CD8-positive, alpha-beta T cell (primary cell): ENCODE measurements at regions of chr20 and their contacts with region 1.

Region 1: GRCh38 chr20:32674362-32674789 is 635 bp upstream of the C20orf203 start:
- DNase-seq: peak; percentile 49 to 77 (median 73)
- ATAC-seq: peak; percentile 73
- H3K4me3 ChIP-seq: no peak overlapping the region
- H3K4me3 Mint-ChIP-seq: peak overlapping the region; percentile 9
- H3K27ac ChIP-seq: no peak overlapping the region
- H3K27ac Mint-ChIP-seq: no peak overlapping the region
- H3K4me1 ChIP-seq: peaks cover 16% of the 10 kb centered on the region
- H3K4me1 Mint-ChIP-seq: peaks cover 32% of the 10 kb centered on the region
- H3K27me3 ChIP-seq: no peaks in the 10 kb centered on the region
- H3K27me3 Mint-ChIP-seq: no peaks in the 10 kb centered on the region
- CTCF ChIP-seq: peak; percentile 75

Region 2: DNA sequence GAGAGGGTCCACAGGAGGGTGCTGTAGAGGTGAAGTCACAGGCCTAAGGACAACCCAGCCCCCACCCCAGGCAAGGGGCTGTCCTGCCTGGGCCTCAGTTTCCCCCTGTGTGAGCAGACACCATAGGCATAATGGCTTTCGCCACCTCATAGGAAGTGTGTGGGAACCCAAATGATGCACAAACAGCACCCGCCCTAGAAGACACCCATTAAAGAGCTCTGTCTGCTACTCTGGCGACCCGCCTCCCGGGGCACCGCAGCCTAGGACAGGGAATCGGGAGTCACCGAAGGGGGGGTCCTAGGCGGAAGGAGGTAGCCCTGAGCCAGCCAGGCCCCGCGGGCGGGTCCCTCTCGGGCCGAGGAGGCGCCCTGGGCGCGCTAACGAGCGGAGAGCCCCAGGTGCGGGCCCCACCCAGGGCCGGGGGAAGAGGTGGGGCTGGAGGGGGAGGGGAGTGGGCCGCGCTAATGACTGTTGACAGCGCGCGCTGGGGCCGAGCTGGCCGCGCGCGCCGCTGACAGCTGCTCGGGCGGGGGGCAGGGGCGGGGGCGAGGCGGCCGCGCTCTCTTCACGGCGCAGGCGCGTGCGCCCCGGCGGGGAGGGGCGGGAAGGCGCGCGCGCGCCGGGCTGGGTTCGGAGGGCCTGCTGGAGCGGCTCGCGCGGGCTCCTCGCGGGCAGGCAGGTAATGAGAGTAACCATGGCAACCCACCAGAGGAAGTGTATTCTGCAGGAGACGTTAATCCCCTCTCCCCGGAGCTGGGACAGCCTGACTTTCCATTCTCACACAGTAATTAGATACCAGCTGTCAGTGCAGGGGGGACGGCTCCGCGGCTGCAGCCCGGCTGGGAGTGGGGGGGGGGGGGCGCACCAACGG is 138.2 kb before region 1 on chr20:
- CTCF ChIA-PET with region 1: no interaction called
- POLR2A ChIA-PET with region 1: no interaction called
- intact Hi-C with region 1: no loop called
- DNase-seq: peak; percentile 66 to 93 (median 79)
- ATAC-seq: peak; percentile 34
- H3K4me3 ChIP-seq: peak overlapping the region; percentile 33 to 49
- H3K4me3 Mint-ChIP-seq: peak overlapping the region; percentile 82
- H3K27ac ChIP-seq: peak overlapping the region; percentile 52 to 88
- H3K27ac Mint-ChIP-seq: peak overlapping the region; percentile 97
- H3K4me1 ChIP-seq: peaks cover 87% of the 10 kb centered on the region
- H3K4me1 Mint-ChIP-seq: peaks cover 87% of the 10 kb centered on the region
- H3K27me3 ChIP-seq: no peaks in the 10 kb centered on the region
- H3K27me3 Mint-ChIP-seq: no peaks in the 10 kb centered on the region
- CTCF ChIP-seq: no peak

Region 3: GRCh38 chr20:32585011-32585518 is 89.3 kb before region 1 on chr20 and contains the start of gene NOL4L:
- CTCF ChIA-PET with region 1: no interaction called
- POLR2A ChIA-PET with region 1: no interaction called
- intact Hi-C with region 1: no loop called
- DNase-seq: peak in 8 of 9 experiments; percentile 24 to 70 (median 52)
- ATAC-seq: peak; percentile 25
- H3K4me3 ChIP-seq: peak within 1 kb of the TSS; percentile 59 to 74
- H3K4me3 Mint-ChIP-seq: peak within 1 kb of the TSS; percentile 93
- H3K27ac ChIP-seq: no peak within 1 kb of the TSS
- H3K27ac Mint-ChIP-seq: peak within 1 kb of the TSS; percentile 90
- H3K4me1 ChIP-seq: peaks cover 33% of the 10 kb centered on the region
- H3K4me1 Mint-ChIP-seq: peaks cover 42% of the 10 kb centered on the region
- H3K27me3 ChIP-seq: no peaks in the 10 kb centered on the region
- H3K27me3 Mint-ChIP-seq: no peaks in the 10 kb centered on the region
- CTCF ChIP-seq: no peak
- total RNA-seq, gene NOL4L: 39.1 to 39.7 TPM

Region 4: GRCh38 chr20:32743237-32744112 is 69.1 kb after region 1 on chr20 and contains the start of gene COMMD7:
- CTCF ChIA-PET with region 1: interaction called, 5 read pairs
- POLR2A ChIA-PET with region 1: no interaction called
- intact Hi-C with region 1: loop called in 1 of 2 experiments (anchors 5 kb)
- DNase-seq: peak; percentile 33 to 80 (median 65)
- ATAC-seq: peak; percentile 80
- H3K4me3 ChIP-seq: peak within 1 kb of the TSS; percentile 74 to 76
- H3K4me3 Mint-ChIP-seq: peak within 1 kb of the TSS; percentile 93
- H3K27ac ChIP-seq: peak within 1 kb of the TSS; percentile 79 to 91
- H3K27ac Mint-ChIP-seq: peak within 1 kb of the TSS; percentile 96
- H3K4me1 ChIP-seq: peaks cover 20% of the 10 kb centered on the region
- H3K4me1 Mint-ChIP-seq: peaks cover 38% of the 10 kb centered on the region
- H3K27me3 ChIP-seq: no peaks in the 10 kb centered on the region
- H3K27me3 Mint-ChIP-seq: no peaks in the 10 kb centered on the region
- CTCF ChIP-seq: no peak
- total RNA-seq, gene COMMD7: 25.5 to 26.7 TPM

Region 5: DNA sequence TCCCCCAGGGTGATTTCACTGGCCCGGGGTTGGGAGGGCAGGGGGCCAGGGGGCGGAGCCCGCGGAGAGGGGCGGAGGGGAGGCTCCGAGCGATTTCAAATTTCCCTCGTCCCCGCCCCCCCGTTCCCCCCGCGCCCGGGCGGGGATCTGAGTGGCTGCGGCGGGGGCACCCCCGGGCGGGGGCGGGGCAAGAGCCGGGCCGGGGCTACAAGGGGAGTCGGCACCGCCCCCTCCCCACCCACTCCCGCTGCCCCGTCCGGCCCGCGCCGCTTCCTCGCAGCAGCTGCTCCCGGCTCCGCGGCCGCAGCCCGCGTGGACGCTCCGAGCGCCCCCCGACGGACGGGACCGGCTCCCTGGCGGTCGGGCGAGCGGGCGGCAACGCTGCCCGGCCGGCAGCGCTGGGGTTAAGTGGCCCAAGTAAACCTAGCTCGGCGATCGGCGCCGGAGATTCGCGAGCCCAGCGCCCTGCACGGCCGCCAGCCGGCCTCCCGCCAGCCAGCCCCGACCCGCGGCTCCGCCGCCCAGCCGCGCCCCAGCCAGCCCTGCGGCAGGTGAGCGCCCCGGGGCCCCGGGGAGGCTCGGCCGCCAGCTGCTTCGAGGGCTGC is 87.9 kb after region 1 on chr20 and contains the start of gene DNMT3B:
- CTCF ChIA-PET with region 1: interaction called, 18 read pairs
- POLR2A ChIA-PET with region 1: no interaction called
- intact Hi-C with region 1: no loop called
- DNase-seq: peak; percentile 47 to 79 (median 73)
- ATAC-seq: peak; percentile 89
- H3K4me3 ChIP-seq: peak within 1 kb of the TSS; percentile 62 to 65
- H3K4me3 Mint-ChIP-seq: peak within 1 kb of the TSS; percentile 87
- H3K27ac ChIP-seq: no peak within 1 kb of the TSS
- H3K27ac Mint-ChIP-seq: no peak within 1 kb of the TSS
- H3K4me1 ChIP-seq: peaks cover 14% of the 10 kb centered on the region
- H3K4me1 Mint-ChIP-seq: peaks cover 16% of the 10 kb centered on the region
- H3K27me3 ChIP-seq: no peaks in the 10 kb centered on the region
- H3K27me3 Mint-ChIP-seq: no peaks in the 10 kb centered on the region
- CTCF ChIP-seq: no peak
- total RNA-seq, gene DNMT3B: 0.30 to 0.36 TPM

Region 6: GRCh38 chr20:32772046-32772445 is 97.7 kb after region 1 on chr20:
- CTCF ChIA-PET with region 1: interaction called, 305 read pairs
- POLR2A ChIA-PET with region 1: no interaction called
- intact Hi-C with region 1: no loop called
- DNase-seq: no peak
- ATAC-seq: peak; percentile 33
- H3K4me3 ChIP-seq: no peak overlapping the region
- H3K4me3 Mint-ChIP-seq: peak overlapping the region; percentile 8
- H3K27ac ChIP-seq: no peak overlapping the region
- H3K27ac Mint-ChIP-seq: peak overlapping the region; percentile 72
- H3K4me1 ChIP-seq: peaks cover 19% of the 10 kb centered on the region
- H3K4me1 Mint-ChIP-seq: peaks cover 40% of the 10 kb centered on the region
- H3K27me3 ChIP-seq: no peaks in the 10 kb centered on the region
- H3K27me3 Mint-ChIP-seq: no peaks in the 10 kb centered on the region
- CTCF ChIP-seq: no peak

Region 7: GRCh38 chr20:32877507-32877906 is 203.1 kb after region 1 on chr20:
- CTCF ChIA-PET with region 1: no interaction called
- POLR2A ChIA-PET with region 1: no interaction called
- intact Hi-C with region 1: no loop called
- DNase-seq: no peak
- ATAC-seq: no peak
- H3K4me3 ChIP-seq: no peak overlapping the region
- H3K4me3 Mint-ChIP-seq: no peak overlapping the region
- H3K27ac ChIP-seq: no peak overlapping the region
- H3K27ac Mint-ChIP-seq: no peak overlapping the region
- H3K4me1 ChIP-seq: no peaks in the 10 kb centered on the region
- H3K4me1 Mint-ChIP-seq: no peaks in the 10 kb centered on the region
- H3K27me3 ChIP-seq: no peaks in the 10 kb centered on the region
- H3K27me3 Mint-ChIP-seq: no peaks in the 10 kb centered on the region
- CTCF ChIP-seq: no peak

Region 8: DNA sequence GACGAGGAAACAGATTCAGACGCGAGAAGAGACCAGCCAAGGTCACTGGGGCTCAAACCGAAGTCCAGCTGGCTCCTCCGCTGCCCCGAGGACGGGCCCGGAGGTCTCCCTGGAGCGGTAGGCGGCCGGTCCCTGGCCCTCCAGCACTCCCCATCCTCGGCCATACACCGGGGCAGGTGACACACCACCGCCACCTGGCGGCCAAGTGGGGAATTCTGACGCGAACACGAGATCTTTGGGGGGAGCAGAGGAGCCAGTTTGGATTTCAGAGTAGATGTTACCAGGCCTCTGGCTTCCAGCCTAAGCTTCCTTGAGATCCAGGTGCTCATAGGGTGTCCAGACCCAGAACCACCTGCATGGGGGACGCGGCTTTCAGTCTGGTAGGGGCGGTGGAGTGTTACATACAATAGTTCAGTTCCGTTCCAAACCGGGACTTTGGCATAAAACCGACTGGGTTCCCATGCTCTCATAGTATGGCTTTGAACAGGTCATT is 624.8 kb after region 1 on chr20:
- CTCF ChIA-PET with region 1: no interaction called
- POLR2A ChIA-PET with region 1: no interaction called
- intact Hi-C with region 1: loop called in 1 of 2 experiments (anchors 10 kb)
- DNase-seq: peak; percentile 58 to 83 (median 75)
- ATAC-seq: peak; percentile 82
- H3K4me3 ChIP-seq: no peak overlapping the region
- H3K4me3 Mint-ChIP-seq: no peak overlapping the region
- H3K27ac ChIP-seq: no peak overlapping the region
- H3K27ac Mint-ChIP-seq: no peak overlapping the region
- H3K4me1 ChIP-seq: no peaks in the 10 kb centered on the region
- H3K4me1 Mint-ChIP-seq: no peaks in the 10 kb centered on the region
- H3K27me3 ChIP-seq: no peaks in the 10 kb centered on the region
- H3K27me3 Mint-ChIP-seq: peaks cover 6% of the 10 kb centered on the region
- CTCF ChIP-seq: peak; percentile 85

Region 9: GRCh38 chr20:33766686-33767432 is 1092.5 kb after region 1 on chr20:
- CTCF ChIA-PET with region 1: no interaction called
- POLR2A ChIA-PET with region 1: no interaction called
- intact Hi-C with region 1: no loop called
- DNase-seq: no peak
- ATAC-seq: no peak
- H3K4me3 ChIP-seq: no peak overlapping the region
- H3K4me3 Mint-ChIP-seq: no peak overlapping the region
- H3K27ac ChIP-seq: no peak overlapping the region
- H3K27ac Mint-ChIP-seq: no peak overlapping the region
- H3K4me1 ChIP-seq: no peaks in the 10 kb centered on the region
- H3K4me1 Mint-ChIP-seq: no peaks in the 10 kb centered on the region
- H3K27me3 ChIP-seq: no peaks in the 10 kb centered on the region
- H3K27me3 Mint-ChIP-seq: no peaks in the 10 kb centered on the region
- CTCF ChIP-seq: no peak